Heart left ventricle (tissue), 16 donors: ENCODE measurements at regions of chr9 and their contacts with region 1.

Region 1: DNA sequence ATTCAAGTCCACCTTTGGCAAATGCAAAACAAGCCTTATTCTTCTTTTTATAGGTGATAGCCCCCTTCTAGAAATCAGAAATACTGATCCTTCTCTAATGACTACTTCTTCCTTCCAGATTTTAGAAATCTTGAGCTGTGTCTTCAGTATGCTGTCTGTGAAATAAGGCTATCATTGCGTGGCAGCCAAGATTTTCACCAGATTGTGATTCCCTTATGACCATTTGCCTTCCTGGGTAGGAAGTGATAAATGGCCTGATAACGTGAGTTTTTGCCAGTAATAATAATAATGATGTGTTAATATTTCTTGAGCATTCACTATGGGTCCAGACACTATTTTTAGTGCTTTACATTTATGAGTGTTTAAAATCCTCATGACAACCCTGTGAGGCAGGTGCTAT is 80.9 kb downstream of the PIP5K1B start:
- DNase-seq: no peak
- ATAC-seq: no peak
- H3K4me3 ChIP-seq: no peak overlapping the region
- H3K27ac ChIP-seq: no peak overlapping the region
- H3K4me1 ChIP-seq: peaks cover 8 to 63% (median 50%) of the 10 kb centered on the region in 12 donors
- H3K27me3 ChIP-seq: no peaks in the 10 kb centered on the region
- CTCF ChIP-seq: no peak
- POLR2A ChIP-seq: no peak

Region 2: DNA sequence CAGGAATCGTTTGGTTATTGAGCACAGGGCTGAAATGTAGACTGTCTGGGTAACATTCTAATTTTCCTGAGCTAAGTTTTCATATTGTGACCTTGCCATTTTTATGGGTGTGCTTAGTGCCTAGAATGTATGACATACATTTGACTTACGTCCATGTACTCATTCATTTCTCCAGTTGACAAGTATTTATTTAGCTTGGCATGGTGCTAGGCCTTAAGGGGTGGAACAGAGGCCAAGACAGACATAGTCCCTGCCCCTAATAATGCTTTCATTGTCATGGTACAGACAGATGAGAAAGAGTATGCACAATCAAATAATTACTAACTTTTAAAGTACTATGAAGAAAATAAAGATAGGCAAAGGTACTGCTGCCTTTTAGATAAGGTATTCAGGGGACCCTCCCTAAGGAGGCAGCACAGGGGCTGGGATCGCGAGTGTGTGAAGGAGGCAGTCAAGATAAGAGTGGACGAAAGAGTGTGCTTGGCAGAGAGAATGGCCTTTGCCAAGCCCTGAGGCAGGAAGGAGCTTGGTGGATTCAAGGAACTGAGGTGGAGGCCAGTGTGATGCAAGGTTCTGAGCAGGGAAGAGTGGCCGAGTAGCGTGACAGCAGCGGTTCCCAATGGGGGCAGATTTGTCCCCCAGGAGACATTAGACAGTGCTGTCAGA is 47.0 kb after region 1 on chr9:
- intact Hi-C with region 1: loop called in 2 of 10 experiments (anchors 5 kb)
- DNase-seq: no peak
- ATAC-seq: peak in 1 of 4 donors; percentile 18
- H3K4me3 ChIP-seq: no peak overlapping the region
- H3K27ac ChIP-seq: peak overlapping the region in 6 of 12 donors; percentile 3 to 42 (median 28)
- H3K4me1 ChIP-seq: peaks cover 0 to 47% (median 14%) of the 10 kb centered on the region in 12 donors
- H3K27me3 ChIP-seq: no peaks in the 10 kb centered on the region
- CTCF ChIP-seq: no peak
- POLR2A ChIP-seq: no peak

Region 3: DNA sequence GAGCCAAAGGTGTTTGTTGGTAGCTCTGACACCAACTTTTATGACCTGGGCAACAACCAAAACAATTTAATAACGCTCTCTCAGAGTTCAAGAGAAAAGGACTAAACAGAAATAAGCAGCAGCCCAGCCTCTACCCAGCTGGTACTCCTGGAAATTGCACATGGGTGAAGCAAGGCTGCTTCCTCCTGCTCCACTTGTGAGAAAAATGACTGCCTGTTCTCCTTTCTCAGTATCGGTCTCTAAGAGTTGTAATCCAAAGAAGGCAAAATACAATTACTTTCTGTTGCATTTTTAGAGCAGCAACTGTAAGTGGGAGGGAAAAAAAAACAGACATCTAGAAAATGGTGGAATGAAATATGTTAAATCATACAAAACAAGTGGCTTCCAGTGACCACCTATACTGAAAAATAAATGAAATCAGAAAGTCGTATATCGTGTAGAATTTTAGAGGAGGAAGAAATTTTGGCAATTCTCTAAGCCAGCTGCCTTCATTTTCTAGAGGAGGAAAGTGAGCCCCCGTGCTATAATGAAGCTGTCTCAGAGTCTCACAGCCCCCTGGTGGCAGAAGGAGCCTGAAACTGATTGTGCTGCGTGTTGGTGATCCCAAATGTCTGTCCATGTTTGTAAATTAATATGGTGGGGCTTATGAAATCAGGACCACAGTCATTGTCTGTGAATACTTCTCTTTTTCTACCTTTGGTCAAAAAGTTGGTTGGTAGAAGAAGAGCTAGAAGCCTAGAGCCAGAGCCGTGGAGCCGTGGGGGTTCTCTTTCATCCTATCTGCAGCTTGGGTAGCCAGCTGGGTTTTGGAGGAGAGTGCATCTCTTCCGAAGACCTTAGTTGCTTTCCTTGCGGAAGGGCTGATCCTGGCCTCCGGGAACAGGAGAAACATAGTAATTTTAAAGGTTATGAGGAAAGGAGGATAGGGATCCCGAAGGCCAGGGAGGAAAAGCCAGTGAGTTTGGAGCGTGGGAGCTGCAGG is 59.0 kb after region 1 on chr9:
- intact Hi-C with region 1: loop called in 2 of 10 experiments (anchors 5 kb)
- DNase-seq: peak in 2 of 5 donors; percentile 33 to 48
- ATAC-seq: peak in 3 of 4 donors; percentile 40 to 62 (median 48)
- H3K4me3 ChIP-seq: peak overlapping the region in 2 of 12 donors; percentile 25 to 37
- H3K27ac ChIP-seq: peak overlapping the region in 1 of 12 donors; percentile 78
- H3K4me1 ChIP-seq: peaks cover 0 to 35% (median 12%) of the 10 kb centered on the region in 12 donors
- H3K27me3 ChIP-seq: no peaks in the 10 kb centered on the region
- CTCF ChIP-seq: peak; percentile 16 to 65 (median 48)
- POLR2A ChIP-seq: no peak